Activated naive CD4-positive, alpha-beta T cell treated with anti-CD3 and anti-CD28 coated beads for 36 hours (primary cell): ENCODE measurements at regions of chr5 and their contacts with region 1.

Region 1: DNA sequence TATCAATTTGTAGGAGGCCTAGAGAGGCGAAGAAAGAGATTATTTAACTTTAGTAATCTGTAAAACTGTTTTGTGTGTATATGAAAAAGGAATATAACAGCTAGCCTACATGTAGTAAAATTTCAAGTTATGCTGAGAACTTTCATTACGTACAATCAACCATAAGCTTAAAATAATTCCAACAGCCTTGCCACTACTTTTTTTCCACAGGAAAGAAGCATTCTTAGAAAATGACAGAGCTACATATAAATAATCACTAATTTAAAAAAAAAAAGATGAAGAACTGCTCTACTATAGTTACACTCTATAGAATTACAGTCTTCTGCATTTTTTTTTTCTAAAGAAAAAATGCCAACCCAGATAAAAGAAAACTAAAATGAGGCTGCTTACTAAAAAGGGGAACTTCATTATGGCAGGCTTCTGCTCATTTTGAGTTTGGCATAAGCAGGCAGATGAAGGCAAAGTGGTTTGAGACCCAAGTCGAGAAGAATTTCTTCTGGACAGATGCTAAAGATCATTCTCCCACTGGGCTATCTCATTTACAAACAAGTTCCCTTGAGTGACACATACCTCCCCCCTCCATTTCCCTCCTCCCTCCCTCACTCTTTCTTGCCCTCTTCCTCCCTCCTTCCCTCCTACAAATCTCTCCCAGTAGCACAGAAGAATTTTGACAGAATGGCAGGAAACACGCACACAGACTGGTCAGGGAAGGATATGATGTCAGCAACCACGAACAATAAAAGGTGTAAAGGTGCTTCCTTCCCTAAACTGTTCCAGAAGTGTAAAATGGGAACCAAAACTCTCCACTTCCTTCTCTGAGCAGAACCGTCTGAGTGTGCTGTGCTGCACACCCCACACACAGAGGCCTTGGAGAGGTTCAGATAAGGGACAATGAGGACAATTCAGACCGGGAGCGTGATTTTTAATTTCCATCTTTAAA is 56.1 kb downstream of the MEF2C start:
- DNase-seq: peak; percentile 8
- H3K4me3 Mint-ChIP-seq: no peak overlapping the region
- H3K27ac Mint-ChIP-seq: no peak overlapping the region
- H3K4me1 Mint-ChIP-seq: peaks cover 39% of the 10 kb centered on the region
- H3K27me3 Mint-ChIP-seq: peaks cover 18% of the 10 kb centered on the region

Region 2: GRCh38 chr5:88355490-88356050 is 471.3 kb before region 1 on chr5:
- CTCF ChIA-PET with region 1: no interaction called
- intact Hi-C with region 1: no loop called
- DNase-seq: no peak
- H3K4me3 Mint-ChIP-seq: no peak overlapping the region
- H3K27ac Mint-ChIP-seq: no peak overlapping the region
- H3K4me1 Mint-ChIP-seq: no peaks in the 10 kb centered on the region
- H3K27me3 Mint-ChIP-seq: no peaks in the 10 kb centered on the region

Region 3: DNA sequence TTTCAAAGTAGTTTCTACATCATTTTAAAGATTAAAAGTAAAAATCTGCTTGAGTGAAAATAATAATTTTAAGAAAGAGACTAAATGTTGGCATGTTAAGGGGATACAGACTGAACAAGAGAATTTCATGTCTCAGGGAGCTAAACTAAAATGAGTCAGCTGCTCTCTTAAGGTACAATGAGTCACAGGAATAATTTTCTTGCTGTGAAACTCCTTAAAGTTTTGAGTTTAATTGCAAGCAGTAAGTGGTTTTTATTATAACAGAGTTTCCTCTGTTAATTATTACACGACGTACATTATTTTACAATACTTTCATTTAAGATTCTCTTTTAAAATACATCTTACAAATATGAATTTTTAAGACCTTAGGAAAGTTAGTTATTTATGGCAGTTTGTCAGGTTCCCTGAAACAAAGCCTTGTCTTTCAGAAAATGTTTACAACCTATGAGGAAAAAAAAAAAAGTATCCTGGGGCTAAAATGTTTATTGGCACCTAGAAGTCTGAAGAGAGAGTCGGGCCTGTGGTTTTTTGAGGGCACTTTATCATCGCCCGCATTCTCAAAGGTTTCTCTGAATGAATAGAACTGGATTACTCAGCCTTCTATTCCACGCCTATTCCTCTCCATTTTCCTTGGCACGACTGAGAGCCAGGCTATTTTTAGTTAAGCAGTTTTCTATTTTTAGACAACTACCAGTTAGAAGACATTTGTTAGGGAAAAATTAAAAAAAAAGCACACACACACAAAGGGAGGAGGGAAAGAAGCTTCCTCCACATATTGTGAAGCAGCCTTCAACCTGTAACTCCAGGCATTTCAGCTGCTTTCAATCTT is 41.3 kb before region 1 on chr5:
- CTCF ChIA-PET with region 1: no interaction called
- intact Hi-C with region 1: loop called (anchors 1 kb)
- DNase-seq: peak; percentile 13
- H3K4me3 Mint-ChIP-seq: no peak overlapping the region
- H3K27ac Mint-ChIP-seq: no peak overlapping the region
- H3K4me1 Mint-ChIP-seq: peaks cover 15% of the 10 kb centered on the region
- H3K27me3 Mint-ChIP-seq: peaks cover 14% of the 10 kb centered on the region

Region 4: DNA sequence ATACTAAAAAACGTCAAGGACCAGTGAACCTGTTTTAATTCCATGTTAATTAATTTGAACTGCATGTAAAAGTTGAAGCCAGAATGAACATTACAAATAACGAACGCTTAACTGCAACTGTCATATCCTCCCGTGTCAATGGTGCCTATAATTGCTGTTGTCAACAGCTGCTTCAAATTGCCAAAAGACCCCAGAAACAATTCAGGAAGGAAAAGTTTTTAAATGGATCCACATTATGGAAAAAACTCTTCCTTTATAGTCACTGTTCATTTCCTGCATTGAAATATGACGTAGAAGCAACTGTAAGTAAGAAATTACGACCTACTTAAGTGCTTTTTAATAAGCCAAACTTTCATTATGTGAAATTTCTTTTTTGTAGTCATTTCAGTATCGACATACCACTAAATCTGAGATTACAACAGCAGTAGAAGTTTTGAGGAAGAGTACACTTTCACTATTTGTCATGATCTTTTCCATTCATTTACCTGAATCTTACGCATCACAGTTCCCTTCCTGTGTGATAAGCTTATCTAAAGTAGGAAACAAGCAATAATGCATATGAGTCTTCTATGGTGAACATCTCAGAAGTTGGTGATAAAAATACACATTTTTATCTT is 18.3 kb after region 1 on chr5:
- CTCF ChIA-PET with region 1: interaction called, 3 read pairs
- intact Hi-C with region 1: loop called (anchors 1 kb)
- DNase-seq: no peak
- H3K4me3 Mint-ChIP-seq: no peak overlapping the region
- H3K27ac Mint-ChIP-seq: no peak overlapping the region
- H3K4me1 Mint-ChIP-seq: peaks cover 8% of the 10 kb centered on the region
- H3K27me3 Mint-ChIP-seq: peaks cover 14% of the 10 kb centered on the region

Region 5: GRCh38 chr5:88883059-88883835 is 56.3 kb after region 1 on chr5 and contains the start of gene MEF2C:
- CTCF ChIA-PET with region 1: no interaction called
- intact Hi-C with region 1: loop called (anchors 2 kb)
- DNase-seq: peak; percentile 12
- H3K4me3 Mint-ChIP-seq: peak within 1 kb of the TSS; percentile 76
- H3K27ac Mint-ChIP-seq: no peak within 1 kb of the TSS
- H3K4me1 Mint-ChIP-seq: peaks cover 20% of the 10 kb centered on the region
- H3K27me3 Mint-ChIP-seq: peaks cover 57% of the 10 kb centered on the region
- total RNA-seq, gene MEF2C: not detected

Region 6: GRCh38 chr5:88979244-88979643 is 152.3 kb after region 1 on chr5:
- CTCF ChIA-PET with region 1: no interaction called
- intact Hi-C with region 1: loop called (anchors 5 kb)
- DNase-seq: peak; percentile 12
- H3K4me3 Mint-ChIP-seq: no peak overlapping the region
- H3K27ac Mint-ChIP-seq: no peak overlapping the region
- H3K4me1 Mint-ChIP-seq: peaks cover 4% of the 10 kb centered on the region
- H3K27me3 Mint-ChIP-seq: peaks cover 2% of the 10 kb centered on the region